ENCODE measurements at regions of chr1 and their contacts with region 1.

Region 1: DNA sequence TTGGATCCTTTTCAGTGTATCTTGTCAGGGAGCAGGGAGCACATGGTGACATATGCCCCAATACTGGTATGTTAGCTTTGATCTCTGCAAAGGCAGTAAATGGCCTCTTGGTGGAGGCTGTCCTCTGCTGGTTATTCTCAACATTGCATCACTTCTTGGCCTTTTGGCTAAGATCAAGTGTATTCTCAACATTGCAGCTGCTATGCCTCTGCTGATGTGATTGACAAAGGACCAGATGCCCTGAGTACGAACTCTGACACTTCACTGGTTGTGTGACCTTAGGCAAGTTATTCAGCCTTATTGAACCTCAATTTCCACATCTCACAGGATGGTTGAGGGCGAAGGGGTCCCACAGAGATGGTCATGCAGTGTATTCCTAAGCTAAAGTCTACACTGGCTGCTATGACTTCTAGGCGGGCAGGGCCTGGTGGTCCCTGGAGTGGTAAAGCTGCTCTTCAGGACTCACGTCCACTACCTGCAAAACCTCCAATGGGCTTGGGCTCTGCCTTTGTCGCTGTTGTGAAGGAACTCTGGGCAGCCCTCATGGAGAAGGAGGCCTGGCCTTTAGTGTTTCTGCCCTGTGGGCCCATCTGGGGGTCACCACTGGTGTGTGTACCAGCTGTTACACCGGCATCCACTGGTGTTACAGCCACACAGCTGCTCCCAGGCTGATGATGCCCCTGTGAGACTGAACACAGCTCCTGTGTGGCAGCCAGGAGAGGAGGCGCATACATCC is 64.8 kb downstream of the DNTTIP2 start:
- DNase-seq: peak; percentile 68
- H3K4me3 Mint-ChIP-seq: no peak overlapping the region
- H3K27ac Mint-ChIP-seq: no peak overlapping the region
- H3K4me1 Mint-ChIP-seq: peaks cover 11% of the 10 kb centered on the region
- H3K27me3 Mint-ChIP-seq: no peaks in the 10 kb centered on the region
- CTCF ChIP-seq: peak; percentile 90

Region 2: GRCh38 chr1:93437976-93438605 is 376.1 kb before region 1 on chr1:
- CTCF ChIA-PET with region 1: interaction called, 3 read pairs
- intact Hi-C with region 1: loop called (anchors 2 kb)
- DNase-seq: no peak
- H3K4me3 Mint-ChIP-seq: no peak overlapping the region
- H3K27ac Mint-ChIP-seq: no peak overlapping the region
- H3K4me1 Mint-ChIP-seq: peaks cover 14% of the 10 kb centered on the region
- H3K27me3 Mint-ChIP-seq: no peaks in the 10 kb centered on the region
- CTCF ChIP-seq: peak; percentile 43

Region 3: DNA sequence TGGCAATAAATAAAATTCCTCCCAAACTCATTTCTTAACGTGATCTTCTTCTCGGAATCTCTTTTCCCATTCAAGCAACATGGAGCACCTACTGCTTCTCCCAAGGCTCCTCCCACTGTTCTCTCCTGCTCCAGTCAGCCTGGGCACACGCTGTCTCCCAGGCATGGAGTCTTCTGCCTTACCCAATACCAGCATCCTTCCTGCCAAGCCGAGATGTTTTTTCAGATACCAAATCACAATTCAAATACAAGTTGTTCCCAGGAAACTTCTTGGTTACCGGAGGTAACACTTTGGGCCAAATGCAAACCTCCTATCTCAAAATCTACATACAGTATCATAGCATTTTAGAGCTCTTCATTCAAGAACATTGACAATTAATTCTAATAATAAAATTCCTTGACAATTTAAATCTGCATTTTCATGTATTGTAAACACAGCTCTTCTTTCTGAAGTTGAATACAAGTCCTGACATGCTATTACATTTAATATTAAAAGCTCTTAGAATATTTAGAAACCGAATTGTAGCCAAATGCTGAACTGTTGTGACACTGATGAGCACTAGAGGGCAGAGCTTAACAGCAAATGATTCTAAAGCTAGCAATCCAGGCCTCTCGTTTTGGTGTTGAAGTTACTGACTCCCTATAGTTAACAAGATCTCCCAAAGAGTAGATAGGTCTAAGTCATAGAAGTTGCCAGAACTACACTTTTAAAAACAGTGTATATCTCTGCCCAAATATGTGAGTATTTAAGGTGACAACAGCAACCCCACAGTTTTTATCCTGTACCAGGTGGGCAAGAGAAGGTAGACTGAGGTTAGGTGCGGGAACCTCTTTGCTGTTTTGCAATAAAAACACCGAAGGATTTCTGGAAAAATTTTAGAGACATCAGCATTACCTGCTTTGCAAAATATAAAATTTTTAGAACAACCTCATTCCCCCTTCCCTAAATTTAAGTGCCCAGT is 184.8 kb before region 1 on chr1:
- CTCF ChIA-PET with region 1: interaction called, 125 read pairs
- intact Hi-C with region 1: loop called (anchors 1 kb)
- DNase-seq: peak; percentile 49
- H3K4me3 Mint-ChIP-seq: no peak overlapping the region
- H3K27ac Mint-ChIP-seq: peak overlapping the region; percentile 7
- H3K4me1 Mint-ChIP-seq: peaks cover 38% of the 10 kb centered on the region
- H3K27me3 Mint-ChIP-seq: no peaks in the 10 kb centered on the region
- CTCF ChIP-seq: peak; percentile 77

Region 4: DNA sequence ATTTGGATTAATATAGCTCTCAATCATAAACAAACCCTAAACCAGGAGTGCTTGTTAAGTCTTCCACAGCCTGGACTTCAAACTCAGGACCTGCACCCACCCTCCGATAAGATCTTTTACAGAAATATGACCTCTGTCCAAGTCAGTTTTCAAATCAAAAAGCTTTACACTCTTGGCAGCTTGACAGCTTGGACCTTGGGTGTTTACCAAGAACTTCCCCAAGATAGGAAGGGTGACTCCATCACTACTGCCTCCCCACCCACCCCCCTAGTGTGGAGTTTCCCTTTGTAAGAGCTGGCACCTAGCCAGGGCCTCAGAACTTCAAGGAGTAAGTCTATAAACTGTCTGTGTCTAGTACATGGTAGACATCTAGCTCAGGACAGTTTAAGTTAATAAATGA is 142.2 kb before region 1 on chr1:
- CTCF ChIA-PET with region 1: interaction called, 15 read pairs
- intact Hi-C with region 1: no loop called
- DNase-seq: peak; percentile 70
- H3K4me3 Mint-ChIP-seq: no peak overlapping the region
- H3K27ac Mint-ChIP-seq: no peak overlapping the region
- H3K4me1 Mint-ChIP-seq: peaks cover 57% of the 10 kb centered on the region
- H3K27me3 Mint-ChIP-seq: no peaks in the 10 kb centered on the region
- CTCF ChIP-seq: no peak

Region 5: GRCh38 chr1:93680757-93681550 is 133.3 kb before region 1 on chr1:
- CTCF ChIA-PET with region 1: interaction called, 5 read pairs
- intact Hi-C with region 1: loop called (anchors 5 kb)
- DNase-seq: peak; percentile 83
- H3K4me3 Mint-ChIP-seq: peak overlapping the region; percentile 92
- H3K27ac Mint-ChIP-seq: peak overlapping the region; percentile 68
- H3K4me1 Mint-ChIP-seq: peaks cover 24% of the 10 kb centered on the region
- H3K27me3 Mint-ChIP-seq: no peaks in the 10 kb centered on the region
- CTCF ChIP-seq: peak; percentile 50

Region 6: DNA sequence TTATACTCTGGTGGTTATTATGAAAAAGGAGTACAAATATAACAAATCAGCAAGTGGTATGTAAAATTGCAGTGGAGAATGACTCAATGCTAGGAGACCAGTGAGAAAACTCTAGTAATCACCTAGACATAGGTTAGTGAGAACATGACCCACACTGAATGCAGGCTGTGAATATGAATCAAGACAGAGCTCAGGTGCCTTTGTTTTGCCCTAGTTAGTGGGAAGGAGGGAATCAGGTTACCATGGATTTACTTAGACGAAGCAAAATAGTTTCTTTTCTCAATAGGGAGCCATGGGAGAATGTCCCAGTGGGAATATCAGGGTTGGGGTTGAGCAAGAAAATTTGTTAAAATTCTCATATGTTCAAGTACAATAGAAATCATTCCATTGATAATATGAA is 105.6 kb after region 1 on chr1:
- CTCF ChIA-PET with region 1: no interaction called
- intact Hi-C with region 1: no loop called
- DNase-seq: no peak
- H3K4me3 Mint-ChIP-seq: no peak overlapping the region
- H3K27ac Mint-ChIP-seq: no peak overlapping the region
- H3K4me1 Mint-ChIP-seq: no peaks in the 10 kb centered on the region
- H3K27me3 Mint-ChIP-seq: peaks cover 11% of the 10 kb centered on the region
- CTCF ChIP-seq: no peak

Measured in Calu3 (cell line).